ENCODE measurements at regions of chr3 and their contacts with region 1.

Region 1: DNA sequence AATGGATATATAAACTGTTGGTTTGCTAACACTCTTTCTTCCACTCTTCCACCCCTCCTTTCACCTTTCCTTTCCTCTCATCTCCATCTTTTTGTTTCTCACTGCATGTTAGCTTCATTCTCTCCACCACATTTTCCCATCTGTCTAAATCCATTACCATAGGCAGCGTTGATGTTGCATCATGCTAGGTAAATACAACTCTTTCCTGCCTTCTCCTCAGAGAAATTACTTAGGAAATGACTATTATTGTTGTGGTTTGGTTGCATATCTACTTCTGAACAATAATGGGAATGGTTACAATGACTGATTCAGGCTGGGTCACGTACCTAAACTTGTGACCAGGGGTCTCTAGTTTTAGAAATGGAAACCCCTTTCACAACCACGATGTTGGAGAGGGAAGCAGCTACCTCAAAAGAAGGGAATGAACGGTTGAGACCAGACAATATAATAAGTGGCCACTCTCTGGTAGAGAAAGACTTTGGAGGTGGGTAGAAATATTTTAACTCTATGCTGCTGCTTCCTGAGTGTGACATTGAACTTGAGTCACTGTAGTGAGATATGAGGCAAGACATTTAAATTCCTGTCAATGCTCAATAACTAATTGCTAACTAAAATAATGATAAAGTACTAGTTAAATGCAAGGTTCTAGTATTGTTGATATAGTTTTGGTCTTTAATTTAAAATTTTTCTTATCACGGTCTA is 314.1 kb upstream of the TGFBR2 start:
- DNase-seq: peak; percentile 93
- H3K4me3 ChIP-seq: peak overlapping the region in 1 of 3 experiments; percentile 44
- H3K27ac ChIP-seq: peak overlapping the region; percentile 99
- H3K4me1 ChIP-seq: peaks cover 63% of the 10 kb centered on the region
- H3K27me3 ChIP-seq: no peaks in the 10 kb centered on the region
- CTCF ChIP-seq: no peak
- POLR2A ChIP-seq: no peak

Region 2: GRCh38 chr3:30227571-30228301 is 64.6 kb before region 1 on chr3:
- CTCF ChIA-PET with region 1: interaction called, 3 read pairs
- POLR2A ChIA-PET with region 1: no interaction called
- dilution Hi-C with region 1: no loop called
- intact Hi-C with region 1: loop called (anchors 2 kb)
- DNase-seq: peak; percentile 90
- H3K4me3 ChIP-seq: no peak overlapping the region
- H3K27ac ChIP-seq: peak overlapping the region; percentile 67
- H3K4me1 ChIP-seq: peaks cover 26% of the 10 kb centered on the region
- H3K27me3 ChIP-seq: no peaks in the 10 kb centered on the region
- CTCF ChIP-seq: no peak
- POLR2A ChIP-seq: no peak

Region 3: DNA sequence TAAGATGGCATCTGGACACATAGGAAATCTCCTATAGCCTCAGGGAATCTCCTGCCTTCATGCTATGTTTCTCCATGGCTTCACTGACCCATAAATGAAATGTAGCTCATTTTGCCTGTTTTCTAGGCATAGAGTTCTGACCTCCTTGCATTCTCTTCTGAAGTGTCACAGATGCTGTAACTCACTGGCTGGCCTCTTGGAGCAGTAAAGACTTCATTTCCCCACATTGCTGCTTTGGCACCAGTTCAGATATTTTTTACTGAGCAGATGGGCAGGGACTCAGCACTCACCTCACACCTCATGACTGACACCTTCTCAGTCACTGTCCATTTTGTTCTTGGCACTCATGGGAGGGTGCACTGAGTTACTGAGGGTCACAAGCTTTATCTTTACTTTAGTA is 27.4 kb after region 1 on chr3:
- CTCF ChIA-PET with region 1: interaction called, 5 read pairs
- POLR2A ChIA-PET with region 1: no interaction called
- dilution Hi-C with region 1: no loop called
- intact Hi-C with region 1: loop called (anchors 2 kb)
- DNase-seq: peak; percentile 60
- H3K4me3 ChIP-seq: no peak overlapping the region
- H3K27ac ChIP-seq: no peak overlapping the region
- H3K4me1 ChIP-seq: no peaks in the 10 kb centered on the region
- H3K27me3 ChIP-seq: no peaks in the 10 kb centered on the region
- CTCF ChIP-seq: peak; percentile 33 to 39
- POLR2A ChIP-seq: no peak

Region 4: GRCh38 chr3:30370681-30371271 is 78.4 kb after region 1 on chr3:
- CTCF ChIA-PET with region 1: no interaction called
- POLR2A ChIA-PET with region 1: no interaction called
- dilution Hi-C with region 1: no loop called
- intact Hi-C with region 1: loop called (anchors 2 kb)
- DNase-seq: peak; percentile 95
- H3K4me3 ChIP-seq: no peak overlapping the region
- H3K27ac ChIP-seq: peak overlapping the region; percentile 49
- H3K4me1 ChIP-seq: peaks cover 17% of the 10 kb centered on the region
- H3K27me3 ChIP-seq: no peaks in the 10 kb centered on the region
- CTCF ChIP-seq: no peak
- POLR2A ChIP-seq: peak; percentile 51

Region 5: GRCh38 chr3:30511524-30512278 is 219.4 kb after region 1 on chr3:
- CTCF ChIA-PET with region 1: no interaction called
- POLR2A ChIA-PET with region 1: no interaction called
- dilution Hi-C with region 1: no loop called
- intact Hi-C with region 1: loop called (anchors 2 kb)
- DNase-seq: peak; percentile 64
- H3K4me3 ChIP-seq: no peak overlapping the region
- H3K27ac ChIP-seq: peak overlapping the region; percentile 72
- H3K4me1 ChIP-seq: peaks cover 49% of the 10 kb centered on the region
- H3K27me3 ChIP-seq: no peaks in the 10 kb centered on the region
- CTCF ChIP-seq: no peak
- POLR2A ChIP-seq: no peak

Region 6: DNA sequence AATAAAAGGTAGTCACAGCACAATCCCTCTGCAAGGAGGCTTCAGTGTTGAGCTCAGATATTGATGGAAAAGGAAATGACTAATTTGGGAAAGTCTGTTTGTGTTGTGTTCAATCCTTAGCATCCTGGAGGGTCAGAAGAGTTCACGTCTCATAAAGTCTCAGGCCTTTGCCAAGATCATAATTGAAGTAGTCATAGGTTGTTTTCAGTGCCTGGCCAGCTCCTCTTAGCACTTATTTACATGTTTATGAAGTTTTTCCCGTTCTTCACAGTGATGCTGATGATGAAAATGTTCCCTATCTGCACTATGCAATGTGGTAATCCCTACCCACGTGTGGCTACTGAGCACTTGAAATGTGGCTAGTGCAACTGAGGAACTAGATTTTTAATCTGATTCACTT is 252.5 kb after region 1 on chr3:
- CTCF ChIA-PET with region 1: interaction called, 3 read pairs
- POLR2A ChIA-PET with region 1: no interaction called
- dilution Hi-C with region 1: no loop called
- intact Hi-C with region 1: loop called (anchors 1 kb)
- DNase-seq: peak; percentile 99
- H3K4me3 ChIP-seq: no peak overlapping the region
- H3K27ac ChIP-seq: peak overlapping the region; percentile 95
- H3K4me1 ChIP-seq: peaks cover 37% of the 10 kb centered on the region
- H3K27me3 ChIP-seq: no peaks in the 10 kb centered on the region
- CTCF ChIP-seq: no peak
- POLR2A ChIP-seq: no peak

Measured in endothelial cell of umbilical vein (primary cell).